Activated B cell treated with CpG ODN at 0.5 μM for 24 hours (primary cell): ENCODE measurements at regions of chr4 and their contacts with region 1.

Region 1: GRCh38 chr4:122922877-122923511 is 597 bp upstream of the NUDT6 start:
- DNase-seq: peak; percentile 70
- ATAC-seq: peak; percentile 97
- H3K4me3 Mint-ChIP-seq: peak overlapping the region; percentile 98
- H3K27ac Mint-ChIP-seq: peak overlapping the region; percentile 91
- H3K4me1 Mint-ChIP-seq: peaks cover 13% of the 10 kb centered on the region
- H3K27me3 Mint-ChIP-seq: no peaks in the 10 kb centered on the region
- CTCF ChIP-seq: no peak

Region 2: DNA sequence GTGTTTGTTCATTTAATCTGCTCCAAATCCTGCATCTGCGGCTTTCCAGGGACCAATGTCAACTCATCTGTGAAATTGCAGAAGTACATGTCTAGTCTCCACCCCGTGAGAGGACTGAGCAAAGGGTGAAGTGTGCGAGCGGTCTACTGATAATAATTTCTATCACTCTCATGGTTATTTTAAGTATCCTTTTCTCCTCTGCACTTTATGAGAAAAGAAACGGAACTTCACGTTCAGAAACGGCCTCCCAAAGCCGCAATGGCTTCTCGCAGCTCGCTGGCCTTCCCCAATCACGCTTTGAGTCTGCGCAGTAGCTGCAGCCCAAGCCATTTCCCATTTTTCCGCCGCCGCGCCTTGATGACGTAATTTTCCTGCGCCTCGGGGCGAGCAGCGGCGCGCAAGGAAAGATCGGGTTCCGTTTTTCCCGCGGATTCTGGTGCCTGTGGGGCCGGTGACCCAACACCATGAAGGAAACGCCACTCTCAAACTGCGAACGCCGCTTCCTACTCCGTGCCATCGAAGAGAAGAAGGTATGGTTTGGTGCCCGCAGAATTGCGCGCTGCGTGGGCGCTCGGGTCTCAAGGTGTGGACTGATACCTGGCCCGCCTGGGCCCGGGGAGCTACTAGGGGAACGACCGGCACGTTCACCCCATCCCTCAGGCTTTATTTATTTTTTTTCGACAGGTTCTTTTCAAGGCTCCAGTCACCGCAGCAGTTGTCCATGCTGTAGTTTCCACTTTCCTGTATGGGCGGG is 1121.9 kb before region 1 on chr4 and contains the start of gene EXOSC9:
- CTCF ChIA-PET with region 1: no interaction called
- POLR2A ChIA-PET with region 1: no interaction called
- intact Hi-C with region 1: loop called (anchors 5 kb)
- DNase-seq: peak; percentile 94
- ATAC-seq: peak; percentile 81
- H3K4me3 Mint-ChIP-seq: peak within 1 kb of the TSS; percentile 96
- H3K27ac Mint-ChIP-seq: peak within 1 kb of the TSS; percentile 100
- H3K4me1 Mint-ChIP-seq: peaks cover 31% of the 10 kb centered on the region
- H3K27me3 Mint-ChIP-seq: no peaks in the 10 kb centered on the region
- CTCF ChIP-seq: no peak
- total RNA-seq, gene EXOSC9: 37.5 and 39.1 TPM in 2 replicates

Region 3: GRCh38 chr4:121823505-121824170 is 1099.4 kb before region 1 on chr4 and contains the start of gene CCNA2:
- CTCF ChIA-PET with region 1: no interaction called
- POLR2A ChIA-PET with region 1: no interaction called
- intact Hi-C with region 1: loop called (anchors 5 kb)
- DNase-seq: peak; percentile 86
- ATAC-seq: peak; percentile 99
- H3K4me3 Mint-ChIP-seq: peak within 1 kb of the TSS; percentile 87
- H3K27ac Mint-ChIP-seq: peak within 1 kb of the TSS; percentile 82
- H3K4me1 Mint-ChIP-seq: peaks cover 17% of the 10 kb centered on the region
- H3K27me3 Mint-ChIP-seq: no peaks in the 10 kb centered on the region
- CTCF ChIP-seq: no peak
- total RNA-seq, gene CCNA2: 1.4 and 2.0 TPM in 2 replicates

Region 4: DNA sequence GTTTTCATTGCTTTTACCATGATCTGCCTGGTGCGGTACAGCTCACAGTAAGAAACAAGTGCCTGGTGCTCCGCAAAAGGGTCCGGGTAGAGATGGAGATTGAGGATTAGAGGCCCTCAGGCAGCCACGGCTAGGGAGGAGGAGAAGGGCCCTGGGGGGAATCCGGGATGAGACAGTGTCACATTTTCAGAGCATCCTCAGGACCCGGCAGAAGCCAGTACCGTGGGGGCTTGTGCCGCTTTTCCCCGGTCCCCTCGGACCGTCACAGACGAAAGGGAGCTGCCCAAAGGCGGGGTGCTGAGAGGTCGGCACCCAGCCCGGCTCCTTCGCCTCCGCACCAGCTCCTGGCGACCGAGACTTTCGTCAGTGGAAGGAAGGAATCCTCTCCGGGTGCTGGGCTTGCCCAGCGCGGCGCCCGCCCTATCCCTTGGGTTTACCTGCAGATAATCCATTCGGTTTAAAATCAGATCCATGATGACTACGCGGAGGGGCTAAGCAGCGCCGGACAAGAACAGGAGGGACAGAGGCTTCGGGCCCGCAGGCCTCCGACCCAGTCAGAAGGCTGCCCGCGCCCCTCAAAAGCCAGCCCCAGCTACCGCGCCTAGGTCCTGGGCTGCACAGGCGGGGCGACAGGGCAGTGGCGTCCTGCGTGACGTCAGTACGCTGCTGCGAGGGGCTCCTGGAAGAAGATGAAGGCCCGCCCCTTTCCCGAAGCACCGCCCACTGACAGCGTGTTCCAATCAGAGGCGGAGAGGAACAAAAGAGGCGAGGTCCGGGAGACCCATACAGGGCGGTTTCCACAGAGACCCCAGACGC is 1052.9 kb before region 1 on chr4 and contains the start of gene BBS7:
- CTCF ChIA-PET with region 1: no interaction called
- POLR2A ChIA-PET with region 1: no interaction called
- intact Hi-C with region 1: loop called (anchors 1 kb)
- DNase-seq: peak; percentile 96
- ATAC-seq: peak; percentile 99
- H3K4me3 Mint-ChIP-seq: peak within 1 kb of the TSS; percentile 97
- H3K27ac Mint-ChIP-seq: peak within 1 kb of the TSS; percentile 66
- H3K4me1 Mint-ChIP-seq: peaks cover 15% of the 10 kb centered on the region
- H3K27me3 Mint-ChIP-seq: peaks cover 8% of the 10 kb centered on the region
- CTCF ChIP-seq: no peak
- total RNA-seq, gene BBS7: 7.5 and 9.4 TPM in 2 replicates

Region 5: GRCh38 chr4:122151982-122152710 is 770.8 kb before region 1 on chr4 and contains the start of gene BLTP1:
- CTCF ChIA-PET with region 1: no interaction called
- POLR2A ChIA-PET with region 1: no interaction called
- intact Hi-C with region 1: loop called (anchors 1 kb)
- DNase-seq: peak; percentile 85
- ATAC-seq: peak; percentile 95
- H3K4me3 Mint-ChIP-seq: peak within 1 kb of the TSS; percentile 97
- H3K27ac Mint-ChIP-seq: peak within 1 kb of the TSS; percentile 97
- H3K4me1 Mint-ChIP-seq: peaks cover 39% of the 10 kb centered on the region
- H3K27me3 Mint-ChIP-seq: no peaks in the 10 kb centered on the region
- CTCF ChIP-seq: no peak
- total RNA-seq, gene BLTP1: 39.1 and 44.4 TPM in 2 replicates

Region 6: GRCh38 chr4:122827879-122828601 is 95.0 kb before region 1 on chr4:
- CTCF ChIA-PET with region 1: no interaction called
- POLR2A ChIA-PET with region 1: no interaction called
- intact Hi-C with region 1: loop called (anchors 1 kb)
- DNase-seq: no peak
- ATAC-seq: peak; percentile 77
- H3K4me3 Mint-ChIP-seq: peak overlapping the region; percentile 81
- H3K27ac Mint-ChIP-seq: peak overlapping the region; percentile 32
- H3K4me1 Mint-ChIP-seq: peaks cover 18% of the 10 kb centered on the region
- H3K27me3 Mint-ChIP-seq: peaks cover 70% of the 10 kb centered on the region
- CTCF ChIP-seq: no peak

Region 7: GRCh38 chr4:123232439-123232838 is 309.4 kb after region 1 on chr4:
- CTCF ChIA-PET with region 1: no interaction called
- POLR2A ChIA-PET with region 1: no interaction called
- intact Hi-C with region 1: no loop called
- DNase-seq: no peak
- ATAC-seq: no peak
- H3K4me3 Mint-ChIP-seq: no peak overlapping the region
- H3K27ac Mint-ChIP-seq: no peak overlapping the region
- H3K4me1 Mint-ChIP-seq: no peaks in the 10 kb centered on the region
- H3K27me3 Mint-ChIP-seq: no peaks in the 10 kb centered on the region
- CTCF ChIP-seq: no peak

Region 8: GRCh38 chr4:124262211-124263179 is 1339.5 kb after region 1 on chr4:
- CTCF ChIA-PET with region 1: no interaction called
- POLR2A ChIA-PET with region 1: no interaction called
- intact Hi-C with region 1: loop called (anchors 10 kb)
- DNase-seq: no peak
- ATAC-seq: peak; percentile 56
- H3K4me3 Mint-ChIP-seq: no peak overlapping the region
- H3K27ac Mint-ChIP-seq: no peak overlapping the region
- H3K4me1 Mint-ChIP-seq: no peaks in the 10 kb centered on the region
- H3K27me3 Mint-ChIP-seq: no peaks in the 10 kb centered on the region
- CTCF ChIP-seq: no peak